ENCODE measurements at regions of chr17 and their contacts with region 1.

Region 1: DNA sequence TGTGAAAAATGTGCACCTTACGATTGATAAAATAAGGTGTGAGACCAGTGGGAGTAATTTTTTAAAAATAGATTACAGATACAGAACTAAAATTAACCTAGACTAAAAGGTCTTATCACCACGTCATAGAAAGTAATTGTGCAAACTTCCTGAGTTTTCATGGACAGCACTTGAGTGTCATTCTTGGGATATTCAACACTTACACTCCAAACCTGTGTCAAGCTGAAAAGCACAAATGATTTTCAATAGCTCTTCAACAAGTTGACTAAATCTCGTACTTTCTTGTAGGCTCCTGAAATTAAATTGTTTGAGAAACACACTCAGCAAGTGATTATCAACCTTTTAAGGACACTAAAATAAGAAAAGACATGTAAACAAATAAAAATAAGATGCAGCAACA is 20.5 kb downstream of the BRCA1 start:
- DNase-seq: no peak
- ATAC-seq: no peak
- H3K4me3 Mint-ChIP-seq: no peak overlapping the region
- H3K27ac Mint-ChIP-seq: no peak overlapping the region
- H3K4me1 Mint-ChIP-seq: no peaks in the 10 kb centered on the region
- H3K27me3 Mint-ChIP-seq: no peaks in the 10 kb centered on the region

Region 2: DNA sequence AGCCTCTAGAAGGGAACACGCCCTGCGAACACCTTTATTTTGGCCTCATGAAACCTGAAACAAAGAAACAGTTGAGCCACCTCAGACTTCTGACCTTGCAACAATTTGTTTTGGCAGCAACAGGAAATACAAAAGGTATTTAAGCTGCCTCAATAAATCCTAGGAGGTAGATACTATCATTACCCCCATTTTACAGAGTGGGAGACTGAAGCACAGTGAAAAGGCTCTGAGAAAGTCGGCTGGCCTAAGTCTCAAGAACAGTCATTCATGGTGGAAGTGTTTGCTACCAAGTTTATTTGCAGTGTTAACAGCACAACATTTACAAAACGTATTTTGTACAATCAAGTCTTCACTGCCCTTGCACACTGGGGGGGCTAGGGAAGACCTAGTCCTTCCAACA is 60.6 kb before region 1 on chr17:
- CTCF ChIA-PET with region 1: no interaction called
- POLR2A ChIA-PET with region 1: no interaction called
- intact Hi-C with region 1: no loop called
- DNase-seq: no peak
- ATAC-seq: no peak
- H3K4me3 Mint-ChIP-seq: no peak overlapping the region
- H3K27ac Mint-ChIP-seq: no peak overlapping the region
- H3K4me1 Mint-ChIP-seq: no peaks in the 10 kb centered on the region
- H3K27me3 Mint-ChIP-seq: no peaks in the 10 kb centered on the region

Region 3: DNA sequence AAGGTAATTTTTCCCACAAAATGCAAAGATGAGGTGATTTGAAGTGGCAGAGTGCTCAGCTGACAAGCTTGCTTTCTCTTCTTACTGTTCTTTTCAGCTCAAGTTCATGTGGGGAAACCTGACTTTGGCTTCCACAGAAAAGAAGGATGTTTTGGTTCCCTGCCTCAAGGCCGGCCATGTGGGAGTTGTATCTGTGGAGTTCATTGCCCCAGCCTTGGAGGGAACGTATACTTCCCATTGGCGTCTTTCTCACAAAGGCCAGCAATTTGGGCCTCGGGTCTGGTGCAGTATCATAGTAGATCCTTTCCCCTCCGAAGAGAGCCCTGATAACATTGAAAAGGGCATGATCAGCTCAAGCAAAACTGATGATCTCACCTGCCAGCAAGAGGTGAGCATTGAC is 88.6 kb after region 1 on chr17:
- CTCF ChIA-PET with region 1: no interaction called
- POLR2A ChIA-PET with region 1: no interaction called
- intact Hi-C with region 1: loop called in 1 of 2 experiments (anchors 5 kb)
- DNase-seq: no peak
- ATAC-seq: no peak
- H3K4me3 Mint-ChIP-seq: no peak overlapping the region
- H3K27ac Mint-ChIP-seq: no peak overlapping the region
- H3K4me1 Mint-ChIP-seq: no peaks in the 10 kb centered on the region
- H3K27me3 Mint-ChIP-seq: no peaks in the 10 kb centered on the region

Region 4: GRCh38 chr17:43713494-43714162 is 609.0 kb after region 1 on chr17:
- CTCF ChIA-PET with region 1: no interaction called
- POLR2A ChIA-PET with region 1: no interaction called
- intact Hi-C with region 1: no loop called
- DNase-seq: peak; percentile 41
- ATAC-seq: peak; percentile 66
- H3K4me3 Mint-ChIP-seq: peak overlapping the region; percentile 48
- H3K27ac Mint-ChIP-seq: no peak overlapping the region
- H3K4me1 Mint-ChIP-seq: peaks cover 12% of the 10 kb centered on the region
- H3K27me3 Mint-ChIP-seq: peaks cover 37% of the 10 kb centered on the region